ENCODE measurements at regions of chr12 and their contacts with region 1.

Region 1: DNA sequence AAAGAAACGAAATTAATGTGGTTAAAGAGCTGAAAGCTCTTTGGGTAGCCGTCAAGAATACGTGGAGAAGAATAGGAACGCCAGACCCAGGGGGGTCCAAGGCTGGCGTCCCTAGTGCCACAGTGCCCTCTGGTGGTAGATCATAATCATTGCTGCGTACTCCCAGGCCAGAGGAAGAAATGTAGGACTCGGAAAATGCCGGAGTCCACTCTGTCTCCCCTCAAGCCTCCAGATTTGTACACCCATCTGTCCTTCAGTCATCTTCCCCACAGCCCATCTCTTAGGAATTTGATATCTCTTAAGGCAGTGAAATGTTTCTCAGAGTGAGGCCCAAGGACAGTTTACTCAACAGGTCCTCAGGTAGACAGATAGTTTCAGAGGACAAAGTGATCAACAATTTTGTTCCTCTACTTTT is 25.4 kb upstream of the PLEKHG6 start:
- DNase-seq: peak in 2 of 5 donors; percentile 69 to 74
- ATAC-seq: peak; percentile 65 to 87 (median 80)
- H3K4me3 ChIP-seq: no peak overlapping the region
- H3K27ac ChIP-seq: no peak overlapping the region
- H3K4me1 ChIP-seq: peaks cover 0 to 11% (median 5%) of the 10 kb centered on the region in 12 donors
- H3K27me3 ChIP-seq: no peaks in the 10 kb centered on the region
- CTCF ChIP-seq: peak; percentile 86 to 98 (median 92)
- POLR2A ChIP-seq: no peak

Region 2: DNA sequence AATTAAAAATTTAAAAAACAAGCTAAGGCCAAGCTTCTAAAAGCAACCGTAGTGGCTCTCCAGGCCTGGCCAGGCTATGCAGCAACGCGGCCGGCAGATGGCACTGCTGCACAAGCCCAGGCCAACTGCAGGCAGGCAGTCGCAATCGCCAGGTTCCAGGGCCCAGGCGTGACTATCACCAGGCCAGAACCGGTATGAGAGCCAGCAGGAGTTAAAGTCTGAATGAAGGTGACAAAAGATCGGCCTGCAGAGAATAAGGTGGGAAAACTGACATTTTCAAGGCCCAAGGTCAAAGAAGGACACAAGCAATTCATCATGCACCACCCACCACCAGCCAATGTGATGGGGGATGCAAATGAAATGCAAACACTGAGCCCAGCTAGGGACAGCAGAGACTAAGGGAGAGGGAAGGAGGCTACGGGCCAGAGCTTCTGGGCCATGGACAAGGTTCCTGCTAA is 296.4 kb before region 1 on chr12:
- intact Hi-C with region 1: loop called (anchors 1 to 10 kb)
- DNase-seq: peak; percentile 70 to 88 (median 78)
- ATAC-seq: peak; percentile 49 to 92 (median 88)
- H3K4me3 ChIP-seq: no peak overlapping the region
- H3K27ac ChIP-seq: peak overlapping the region in 1 of 12 donors; percentile 28
- H3K4me1 ChIP-seq: peaks cover 0 to 4% (median 0%) of the 10 kb centered on the region in 12 donors
- H3K27me3 ChIP-seq: no peaks in the 10 kb centered on the region
- CTCF ChIP-seq: peak; percentile 89 to 97 (median 92)
- POLR2A ChIP-seq: no peak

Region 3: DNA sequence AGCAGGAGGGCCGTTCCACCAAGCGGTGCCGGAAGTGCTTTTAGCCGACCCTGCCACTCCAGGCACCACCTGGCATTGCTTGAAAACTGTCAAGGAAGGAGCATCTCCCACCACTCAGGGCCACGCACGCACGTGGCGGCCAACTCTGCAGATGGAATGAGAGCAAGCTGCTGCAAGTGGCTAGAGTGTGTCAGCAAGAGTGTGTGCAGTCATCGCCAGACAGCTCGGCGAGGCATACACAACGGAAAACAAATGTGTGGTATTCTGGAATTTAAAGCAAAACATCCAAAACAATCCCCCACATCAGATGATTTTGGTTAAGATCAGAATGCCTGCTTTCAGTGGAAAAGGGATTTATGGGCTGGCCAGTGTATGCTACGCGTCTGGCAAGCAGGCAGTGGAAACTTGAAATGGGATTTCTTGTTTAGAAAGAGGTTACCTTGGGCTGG is 73.6 kb before region 1 on chr12:
- intact Hi-C with region 1: no loop called
- DNase-seq: no peak
- ATAC-seq: no peak
- H3K4me3 ChIP-seq: no peak overlapping the region
- H3K27ac ChIP-seq: peak overlapping the region in 4 of 12 donors; percentile 0 to 99 (median 54)
- H3K4me1 ChIP-seq: peaks cover 7 to 97% (median 54%) of the 10 kb centered on the region in 12 donors
- H3K27me3 ChIP-seq: no peaks in the 10 kb centered on the region
- CTCF ChIP-seq: no peak
- POLR2A ChIP-seq: no peak

Region 4: DNA sequence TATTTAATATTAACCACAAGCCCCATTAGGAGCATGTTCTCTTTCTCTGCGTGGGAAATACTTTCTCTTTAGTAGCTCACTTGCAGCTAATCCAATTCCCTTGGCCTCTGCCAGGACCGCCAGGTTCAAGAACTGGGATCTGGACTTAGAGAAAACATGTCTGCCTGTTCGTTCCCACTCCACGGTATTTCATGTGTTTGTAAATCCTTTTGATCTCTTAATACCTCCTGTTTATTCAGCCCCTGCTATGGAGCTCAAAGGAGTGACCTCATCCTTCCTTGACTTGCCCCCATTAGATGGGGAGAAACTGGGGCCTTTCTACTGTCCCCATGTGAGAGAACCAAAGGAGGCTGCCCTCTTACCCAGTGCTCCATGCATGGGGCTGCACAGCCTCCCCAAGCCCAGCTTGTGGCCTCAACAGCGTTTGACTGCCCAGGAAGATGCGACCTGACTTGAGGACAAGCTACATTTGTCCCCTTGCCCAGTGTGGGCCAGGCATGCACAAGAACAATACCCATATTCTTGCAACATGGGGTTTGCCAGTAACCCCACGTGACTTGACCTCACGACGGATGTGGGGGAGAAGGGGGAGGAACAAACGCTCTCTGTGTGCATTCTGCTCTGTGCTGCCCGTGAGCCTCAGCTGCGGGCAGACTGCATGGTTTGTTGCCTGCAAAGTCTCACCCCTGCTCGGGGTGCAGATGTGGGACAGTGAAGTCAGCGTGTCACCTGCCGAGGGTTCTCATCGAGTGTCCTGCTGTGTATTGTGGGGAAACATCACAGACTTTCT is 54.6 kb before region 1 on chr12:
- intact Hi-C with region 1: no loop called
- DNase-seq: peak; percentile 56 to 71 (median 61)
- ATAC-seq: peak in 2 of 4 donors; percentile 6 to 14
- H3K4me3 ChIP-seq: peak overlapping the region in 1 of 12 donors; percentile 1
- H3K27ac ChIP-seq: peak overlapping the region; percentile 67 to 96 (median 88)
- H3K4me1 ChIP-seq: peaks cover 35 to 100% (median 91%) of the 10 kb centered on the region in 12 donors
- H3K27me3 ChIP-seq: no peaks in the 10 kb centered on the region
- CTCF ChIP-seq: no peak
- POLR2A ChIP-seq: no peak

Region 5: GRCh38 chr12:6563448-6564050 is 278.5 kb after region 1 on chr12:
- intact Hi-C with region 1: no loop called
- DNase-seq: peak in 4 of 5 donors; percentile 47 to 54 (median 48)
- ATAC-seq: no peak
- H3K4me3 ChIP-seq: no peak overlapping the region
- H3K27ac ChIP-seq: no peak overlapping the region
- H3K4me1 ChIP-seq: peaks cover 0 to 16% (median 11%) of the 10 kb centered on the region in 12 donors
- H3K27me3 ChIP-seq: no peaks in the 10 kb centered on the region
- CTCF ChIP-seq: peak; percentile 51 to 83 (median 74)
- POLR2A ChIP-seq: no peak

Measured in heart left ventricle (tissue), 16 donors.